Dorsolateral prefrontal cortex (tissue), 120 donors: ENCODE measurements at regions of chr3 and their contacts with region 1.

Region 1: GRCh38 chr3:177491296-177492032 is 294.2 kb upstream of the TBL1XR1 start:
- DNase-seq: peak in 2 of 10 donors; percentile 57 to 70
- H3K4me3 ChIP-seq: peak overlapping the region in 50 of 59 donors; percentile 2 to 55 (median 27)
- H3K27ac ChIP-seq: peak overlapping the region; percentile 22 to 99 (median 92)
- H3K27me3 ChIP-seq: no peaks in the 10 kb centered on the region
- CTCF ChIP-seq: peak in 2 of 56 donors; percentile 12

Region 2: DNA sequence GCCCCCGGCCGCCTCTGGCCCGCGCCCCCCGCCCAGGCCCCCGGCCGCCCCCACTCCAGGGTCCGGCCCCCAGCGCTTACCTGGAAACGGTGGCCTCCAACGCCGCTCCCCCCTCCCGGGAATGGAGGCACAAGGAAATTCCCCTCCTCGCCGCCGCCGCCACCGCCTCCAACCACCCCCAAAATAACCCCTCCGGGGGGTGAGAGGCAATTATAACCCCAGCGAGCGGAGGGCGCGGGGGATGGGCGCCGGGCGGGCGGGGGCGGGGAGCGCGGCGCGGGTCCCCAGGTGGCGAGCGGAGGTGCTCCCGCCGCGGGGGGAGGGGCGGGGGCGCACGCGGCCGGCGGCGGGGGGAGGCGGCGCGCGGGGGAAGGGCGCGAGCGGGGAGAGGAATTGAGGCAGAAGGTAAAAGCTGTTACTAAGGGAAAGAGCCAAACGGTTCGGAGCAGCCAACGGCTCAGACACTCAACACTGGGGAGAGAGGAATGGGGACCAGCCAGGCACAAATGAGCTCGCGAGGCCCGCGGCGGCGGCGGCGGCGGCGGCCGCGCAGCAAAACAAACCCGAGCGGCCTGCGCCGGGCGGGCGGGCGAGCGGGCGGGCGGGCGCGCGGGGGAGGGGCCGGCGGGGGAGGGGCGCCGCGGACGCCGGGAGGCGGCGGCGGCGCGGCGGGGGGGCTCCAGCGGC is 294.3 kb before region 1 on chr3 and contains the start of gene TBL1XR1:
- intact Hi-C with region 1: loop called (anchors 5 kb)
- DNase-seq: peak; percentile 84 to 94 (median 92)
- H3K4me3 ChIP-seq: peak within 1 kb of the TSS; percentile 60 to 87 (median 77)
- H3K27ac ChIP-seq: peak within 1 kb of the TSS; percentile 71 to 99 (median 95)
- H3K27me3 ChIP-seq: no peaks in the 10 kb centered on the region
- CTCF ChIP-seq: peak in 1 of 56 donors; percentile 12
- total RNA-seq, gene TBL1XR1: 104 to 240 (median 165) TPM

Region 3: GRCh38 chr3:177615015-177615414 is 123.6 kb after region 1 on chr3:
- intact Hi-C with region 1: loop called (anchors 2 to 10 kb)
- DNase-seq: no peak
- H3K4me3 ChIP-seq: no peak overlapping the region
- H3K27ac ChIP-seq: peak overlapping the region in 1 of 59 donors; percentile 4
- H3K27me3 ChIP-seq: no peaks in the 10 kb centered on the region
- CTCF ChIP-seq: no peak

Region 4: DNA sequence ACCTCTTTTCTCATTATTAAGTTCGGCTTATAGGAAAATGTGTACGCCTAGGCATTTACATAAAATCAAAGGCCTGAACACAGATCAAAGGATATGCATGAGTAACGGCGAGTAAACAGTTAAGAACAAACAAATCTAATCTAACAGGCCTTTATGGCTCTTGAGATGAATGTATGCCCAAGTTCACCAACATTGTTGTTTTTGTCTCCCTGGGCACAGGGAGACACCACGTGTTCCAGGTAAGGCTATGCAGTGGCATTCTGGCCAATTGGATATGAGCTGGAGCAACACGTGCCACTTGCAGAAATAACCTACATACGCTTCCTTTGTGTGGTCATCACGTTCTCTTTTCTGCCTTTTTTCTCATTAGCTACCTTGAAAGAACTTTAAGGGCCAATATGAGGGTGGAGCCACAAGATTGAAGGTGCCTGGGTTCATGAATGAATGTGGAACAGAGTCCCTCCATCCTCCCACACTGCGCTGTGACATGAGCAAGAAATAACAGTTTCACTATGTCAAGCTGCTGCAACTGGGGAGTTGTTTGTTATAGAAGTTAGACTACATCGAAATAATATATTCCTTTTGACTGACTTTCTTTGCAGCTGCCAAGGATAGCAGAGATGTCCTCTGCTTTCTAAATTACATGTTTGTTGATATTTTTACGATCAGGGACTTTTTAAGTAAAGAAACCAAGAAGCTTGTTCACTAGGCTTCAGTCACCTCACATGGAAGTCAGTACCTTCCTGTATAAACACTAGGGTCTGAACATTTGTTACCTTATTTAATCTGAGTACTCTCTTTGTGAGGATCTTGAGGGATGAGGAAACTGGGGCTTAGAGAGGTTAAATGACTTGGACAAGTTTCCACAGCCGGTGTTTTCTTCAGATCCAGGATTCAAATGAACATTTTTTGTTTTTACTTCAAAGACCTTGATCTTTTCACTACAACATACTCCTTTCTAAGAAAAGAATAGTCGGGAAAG is 133.3 kb after region 1 on chr3:
- intact Hi-C with region 1: loop called in 1 of 2 experiments (anchors 2 kb)
- DNase-seq: no peak
- H3K4me3 ChIP-seq: no peak overlapping the region
- H3K27ac ChIP-seq: no peak overlapping the region
- H3K27me3 ChIP-seq: no peaks in the 10 kb centered on the region
- CTCF ChIP-seq: no peak

Region 5: GRCh38 chr3:177679568-177680441 is 188.3 kb after region 1 on chr3:
- intact Hi-C with region 1: loop called in 1 of 2 experiments (anchors 10 kb)
- DNase-seq: no peak
- H3K4me3 ChIP-seq: no peak overlapping the region
- H3K27ac ChIP-seq: no peak overlapping the region
- H3K27me3 ChIP-seq: no peaks in the 10 kb centered on the region
- CTCF ChIP-seq: no peak

Region 6: DNA sequence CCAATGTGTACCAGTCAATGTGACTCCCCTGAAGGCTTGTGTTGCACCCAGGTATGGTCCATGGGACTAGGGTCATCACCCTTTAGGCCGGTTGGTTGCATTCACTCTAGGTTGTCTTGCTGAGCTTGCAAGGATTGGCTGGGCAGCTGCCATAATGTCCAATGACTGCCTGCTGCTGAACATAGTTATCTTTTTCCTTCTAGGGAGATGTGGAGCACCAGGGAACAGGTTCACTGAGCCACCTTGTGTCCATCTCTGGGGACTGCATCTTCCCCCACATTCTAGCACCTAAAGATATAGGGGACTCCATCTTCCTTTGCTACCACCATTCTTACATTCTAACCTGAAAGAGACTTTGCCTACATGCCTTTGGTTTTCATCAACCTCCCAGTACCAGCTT is 286.2 kb after region 1 on chr3:
- intact Hi-C with region 1: loop called in 1 of 2 experiments (anchors 5 kb)
- DNase-seq: peak in 7 of 10 donors; percentile 16 to 73 (median 44)
- H3K4me3 ChIP-seq: no peak overlapping the region
- H3K27ac ChIP-seq: no peak overlapping the region
- H3K27me3 ChIP-seq: no peaks in the 10 kb centered on the region
- CTCF ChIP-seq: peak; percentile 21 to 79 (median 63)

Region 7: GRCh38 chr3:178352326-178353005 is 861.0 kb after region 1 on chr3:
- intact Hi-C with region 1: no loop called
- DNase-seq: no peak
- H3K4me3 ChIP-seq: no peak overlapping the region
- H3K27ac ChIP-seq: no peak overlapping the region
- H3K27me3 ChIP-seq: no peaks in the 10 kb centered on the region
- CTCF ChIP-seq: no peak